Adrenal gland (tissue), 19 donors: ENCODE measurements at regions of chr4 and their contacts with region 1.

Region 1: GRCh38 chr4:147678796-147679549 is 5.0 kb downstream of the PRMT9 start:
- DNase-seq: peak in 1 of 7 donors; percentile 9
- H3K4me3 ChIP-seq: no peak overlapping the region
- H3K27ac ChIP-seq: no peak overlapping the region
- H3K4me1 ChIP-seq: peaks cover 6 to 27% of the 10 kb centered on the region in 2 donors
- H3K27me3 ChIP-seq: no peaks in the 10 kb centered on the region
- CTCF ChIP-seq: no peak
- POLR2A ChIP-seq: no peak

Region 2: GRCh38 chr4:147629783-147630730 is 48.9 kb before region 1 on chr4:
- intact Hi-C with region 1: loop called in 1 of 2 experiments (anchors 10 kb)
- DNase-seq: no peak
- H3K4me3 ChIP-seq: no peak overlapping the region
- H3K27ac ChIP-seq: no peak overlapping the region
- H3K4me1 ChIP-seq: no peaks in the 10 kb centered on the region
- H3K27me3 ChIP-seq: no peaks in the 10 kb centered on the region
- CTCF ChIP-seq: no peak
- POLR2A ChIP-seq: no peak